Gastrocnemius medialis (tissue), 4 donors: ENCODE measurements at regions of chr17 and their contacts with region 1.

Region 1: GRCh38 chr17:3845621-3846441 is at the start of gene NCBP3:
- DNase-seq: peak; percentile 82 to 85
- ATAC-seq: peak; percentile 95
- H3K4me3 ChIP-seq: peak within 1 kb of the TSS; percentile 74 to 100 (median 95)
- H3K27ac ChIP-seq: peak within 1 kb of the TSS; percentile 90 to 97 (median 95)
- H3K4me1 ChIP-seq: peaks cover 6 to 16% of the 10 kb centered on the region in 2 donors
- H3K27me3 ChIP-seq: no peaks in the 10 kb centered on the region
- CTCF ChIP-seq: peak; percentile 92 to 99 (median 96)
- POLR2A ChIP-seq: peak; percentile 93 to 94
- total RNA-seq, gene NCBP3: 9.5 to 15.2 (median 14.5) TPM

Region 2: DNA sequence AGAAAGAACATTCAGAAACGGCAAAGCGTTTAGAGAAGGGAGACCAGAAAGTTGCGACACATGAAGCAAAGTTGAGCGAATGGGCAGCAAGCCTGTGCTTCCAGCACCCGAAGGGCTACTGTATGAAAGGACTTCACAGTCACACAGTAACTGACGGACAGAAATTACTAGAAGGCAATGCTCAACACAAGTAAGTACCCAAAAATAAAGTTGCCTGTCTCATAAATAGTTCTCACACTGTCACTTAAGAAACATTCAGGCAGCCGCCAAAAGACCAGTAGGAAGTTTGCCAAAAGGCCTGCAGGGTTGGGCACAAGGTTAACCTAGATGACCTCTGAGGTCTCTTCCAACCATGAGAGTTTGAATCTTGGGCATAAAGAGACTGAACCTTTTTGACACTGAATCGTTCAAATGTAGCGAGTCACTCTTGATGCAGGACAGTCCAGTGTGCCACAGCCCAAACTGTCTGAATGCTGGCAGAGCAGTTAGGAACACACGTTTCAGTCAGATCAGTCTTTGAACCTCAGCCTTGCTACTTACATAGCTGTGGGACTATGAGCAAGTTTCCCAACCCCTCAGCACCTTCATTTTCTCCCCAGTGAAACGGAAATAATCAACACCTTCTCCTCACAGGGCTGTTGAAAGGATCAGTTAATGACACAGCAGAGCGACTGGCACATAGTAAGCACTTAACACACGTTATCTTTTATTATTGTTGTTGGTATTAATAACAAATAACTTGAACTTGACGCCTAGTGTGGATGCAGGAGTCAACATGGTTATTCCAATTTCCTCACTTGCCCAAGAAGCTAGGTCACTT is 10.2 kb before region 1 on chr17:
- in situ Hi-C with region 1: no loop called
- intact Hi-C with region 1: loop called (anchors 1 kb)
- DNase-seq: peak; percentile 40 to 82
- ATAC-seq: peak; percentile 97 to 98
- H3K4me3 ChIP-seq: no peak overlapping the region
- H3K27ac ChIP-seq: peak overlapping the region; percentile 73 to 75 (median 74)
- H3K4me1 ChIP-seq: peaks cover 21 to 26% of the 10 kb centered on the region in 2 donors
- H3K27me3 ChIP-seq: no peaks in the 10 kb centered on the region
- CTCF ChIP-seq: no peak
- POLR2A ChIP-seq: no peak

Region 3: DNA sequence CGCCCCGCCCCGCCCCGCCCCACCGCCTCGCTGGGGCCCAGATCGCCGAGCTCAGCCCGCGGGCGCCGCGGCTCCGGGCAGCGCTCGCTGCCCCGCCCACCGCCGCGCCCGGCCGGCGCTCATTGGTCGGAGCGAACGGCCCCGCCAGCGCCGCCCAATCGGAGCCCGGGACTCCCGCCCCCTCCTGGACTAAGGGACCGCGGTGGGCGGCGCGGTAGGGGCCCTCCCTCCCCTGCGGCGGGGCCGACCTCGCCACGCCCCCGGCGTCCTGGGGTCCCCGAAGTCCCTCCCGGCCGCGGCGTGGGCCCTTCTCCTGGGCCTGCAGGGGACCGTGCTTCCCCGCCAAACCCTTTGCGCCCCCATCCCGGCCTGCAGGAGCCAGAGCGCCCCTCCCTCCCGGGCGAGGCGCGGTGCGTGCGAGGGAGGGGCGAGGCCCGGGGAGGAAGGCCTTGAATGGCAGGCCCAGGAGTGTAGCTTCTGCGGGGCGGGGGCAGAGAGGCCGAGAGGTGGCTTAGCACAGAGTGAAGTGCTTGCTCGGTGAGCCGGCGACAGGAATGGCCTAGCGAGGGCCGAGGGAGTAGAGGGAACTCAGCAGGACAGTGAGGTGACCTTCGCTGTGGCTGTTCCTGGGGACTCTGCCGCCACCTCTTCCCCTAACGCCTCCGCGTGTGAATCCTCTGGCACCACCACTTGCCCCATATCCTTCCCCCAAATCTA is 47.3 kb after region 1 on chr17 and contains the start of gene CAMKK1:
- in situ Hi-C with region 1: no loop called
- intact Hi-C with region 1: loop called (anchors 1 kb)
- DNase-seq: peak; percentile 79 to 84
- ATAC-seq: peak; percentile 75 to 76
- H3K4me3 ChIP-seq: peak within 1 kb of the TSS; percentile 61 to 84 (median 72)
- H3K27ac ChIP-seq: peak within 1 kb of the TSS; percentile 75 to 81 (median 79)
- H3K4me1 ChIP-seq: peaks cover 32 to 37% of the 10 kb centered on the region in 2 donors
- H3K27me3 ChIP-seq: no peaks in the 10 kb centered on the region
- CTCF ChIP-seq: peak in 1 of 5 experiments; percentile 12
- POLR2A ChIP-seq: peak; percentile 37 to 54
- total RNA-seq, gene CAMKK1: 0.44 to 5.1 (median 2.1) TPM

Region 4: GRCh38 chr17:4540224-4540641 is 694.4 kb after region 1 on chr17:
- in situ Hi-C with region 1: no loop called
- intact Hi-C with region 1: no loop called
- DNase-seq: no peak
- ATAC-seq: no peak
- H3K4me3 ChIP-seq: no peak overlapping the region
- H3K27ac ChIP-seq: peak overlapping the region; percentile 57 to 79 (median 70)
- H3K4me1 ChIP-seq: peaks cover 41 to 52% of the 10 kb centered on the region in 2 donors
- H3K27me3 ChIP-seq: no peaks in the 10 kb centered on the region
- CTCF ChIP-seq: peak in 2 of 5 experiments; percentile 8 to 33
- POLR2A ChIP-seq: no peak